Kidney (tissue), 22 donors: ENCODE measurements at regions of chr6 and their contacts with region 1.

Region 1: GRCh38 chr6:31139599-31139998 is 733 bp upstream of the PSORS1C2 start:
- DNase-seq: peak in 2 of 5 donors; percentile 24 to 51
- H3K4me3 ChIP-seq: no peak overlapping the region
- H3K27ac ChIP-seq: no peak overlapping the region
- H3K4me1 ChIP-seq: peaks cover 0 to 6% (median 3%) of the 10 kb centered on the region in 3 donors
- H3K27me3 ChIP-seq: no peaks in the 10 kb centered on the region
- CTCF ChIP-seq: no peak

Region 2: DNA sequence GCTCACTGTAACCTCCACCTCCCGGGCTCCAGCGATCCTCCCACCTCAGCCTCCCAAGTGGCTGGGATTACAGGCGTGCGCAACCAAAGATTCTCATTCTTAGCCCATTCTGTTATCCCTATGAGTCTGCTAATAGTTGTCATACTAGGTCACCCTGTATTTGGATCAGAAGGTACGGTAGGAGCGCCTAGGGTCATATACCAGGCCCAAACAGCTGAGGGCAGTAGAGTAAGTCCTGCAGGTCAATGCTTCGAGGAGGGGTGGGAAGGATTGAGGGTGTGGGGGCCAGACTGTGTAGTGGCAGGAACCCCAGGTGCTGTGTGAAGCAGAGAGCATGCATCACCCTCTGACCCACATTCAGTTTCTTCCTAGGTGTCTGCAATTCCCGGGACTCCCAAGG is 53.6 kb after region 1 on chr6:
- intact Hi-C with region 1: loop called (anchors 5 kb)
- DNase-seq: no peak
- H3K4me3 ChIP-seq: no peak overlapping the region
- H3K27ac ChIP-seq: no peak overlapping the region
- H3K4me1 ChIP-seq: peaks cover 0 to 3% (median 0%) of the 10 kb centered on the region in 3 donors
- H3K27me3 ChIP-seq: no peaks in the 10 kb centered on the region
- CTCF ChIP-seq: no peak